ENCODE measurements at regions of chr1 and their contacts with region 1.

Region 1: GRCh38 chr1:212749821-212750535 is 41.6 kb downstream of the NSL1 start:
- DNase-seq: peak; percentile 67
- H3K4me3 ChIP-seq: no peak overlapping the region
- H3K27ac ChIP-seq: peak overlapping the region; percentile 13
- H3K4me1 ChIP-seq: no peaks in the 10 kb centered on the region
- H3K27me3 ChIP-seq: no peaks in the 10 kb centered on the region
- CTCF ChIP-seq: peak; percentile 68 to 79
- POLR2A ChIP-seq: no peak

Region 2: DNA sequence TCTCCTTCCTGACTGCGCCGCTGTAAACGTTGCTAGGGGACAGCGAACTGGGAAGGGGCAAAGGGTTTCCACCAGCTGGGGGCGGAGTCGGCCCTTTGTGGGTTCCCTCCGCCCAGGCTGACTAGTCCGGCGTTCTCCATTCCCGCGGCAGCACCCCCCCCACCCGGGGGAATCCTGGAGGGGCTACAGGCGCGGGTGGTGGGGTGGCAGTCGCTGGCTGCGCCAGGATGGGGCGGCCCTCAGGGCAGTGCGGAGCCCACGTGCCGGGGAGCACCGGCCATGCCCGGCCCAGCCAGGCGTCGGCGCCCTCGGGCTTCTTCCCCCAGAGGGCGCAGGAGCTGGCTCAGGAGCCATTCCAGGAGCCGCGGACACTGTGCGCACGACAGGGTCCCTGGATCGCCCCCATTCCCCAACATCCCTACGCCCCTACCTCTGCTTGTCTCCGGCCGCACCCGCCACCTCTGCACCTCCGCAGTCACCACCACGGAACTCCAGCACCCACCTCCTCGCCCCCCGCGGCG is 50.8 kb before region 1 on chr1:
- CTCF ChIA-PET with region 1: interaction called, 14 read pairs
- POLR2A ChIA-PET with region 1: no interaction called
- dilution Hi-C with region 1: no loop called
- intact Hi-C with region 1: no loop called
- DNase-seq: peak; percentile 18
- H3K4me3 ChIP-seq: peak overlapping the region in 1 of 3 experiments; percentile 38
- H3K27ac ChIP-seq: no peak overlapping the region
- H3K4me1 ChIP-seq: peaks cover 16% of the 10 kb centered on the region
- H3K27me3 ChIP-seq: peaks cover 37 to 62% of the 10 kb centered on the region in 2 experiments
- CTCF ChIP-seq: peak; percentile 33 to 75
- POLR2A ChIP-seq: no peak

Region 3: DNA sequence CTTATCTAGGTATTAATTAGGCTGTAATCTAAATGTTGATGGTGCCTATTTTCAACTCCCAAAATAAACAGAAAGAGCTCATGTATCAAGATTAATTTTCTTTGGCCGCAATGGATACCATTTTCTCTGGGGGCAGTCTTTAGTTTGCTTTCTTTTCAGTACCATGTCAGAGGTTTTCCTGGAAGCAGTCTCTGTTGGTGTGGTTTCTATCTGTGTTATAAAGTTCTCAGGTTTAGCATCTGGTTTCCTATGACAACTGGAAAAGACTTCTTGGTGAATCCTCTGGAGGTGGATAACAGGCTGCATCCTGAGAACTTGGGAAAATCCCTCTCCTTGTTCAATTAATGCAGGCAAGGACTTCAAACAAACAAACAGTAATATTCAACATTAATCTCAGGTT is 11.6 kb before region 1 on chr1:
- CTCF ChIA-PET with region 1: interaction called, 13 read pairs
- POLR2A ChIA-PET with region 1: no interaction called
- dilution Hi-C with region 1: no loop called
- intact Hi-C with region 1: no loop called
- DNase-seq: no peak
- H3K4me3 ChIP-seq: no peak overlapping the region
- H3K27ac ChIP-seq: no peak overlapping the region
- H3K4me1 ChIP-seq: no peaks in the 10 kb centered on the region
- H3K27me3 ChIP-seq: no peaks in the 10 kb centered on the region
- CTCF ChIP-seq: no peak
- POLR2A ChIP-seq: no peak

Region 4: GRCh38 chr1:212777151-212777550 is 27.2 kb after region 1 on chr1:
- CTCF ChIA-PET with region 1: interaction called, 31 read pairs
- POLR2A ChIA-PET with region 1: no interaction called
- dilution Hi-C with region 1: no loop called
- intact Hi-C with region 1: loop called (anchors 2 kb)
- DNase-seq: no peak
- H3K4me3 ChIP-seq: no peak overlapping the region
- H3K27ac ChIP-seq: no peak overlapping the region
- H3K4me1 ChIP-seq: peaks cover 4% of the 10 kb centered on the region
- H3K27me3 ChIP-seq: no peaks in the 10 kb centered on the region
- CTCF ChIP-seq: no peak
- POLR2A ChIP-seq: no peak

Region 5: GRCh38 chr1:212791676-212792395 is 41.9 kb after region 1 on chr1 and contains the starts of genes NSL1 and TATDN3:
- CTCF ChIA-PET with region 1: interaction called, 23 read pairs
- POLR2A ChIA-PET with region 1: interaction called, 3 read pairs
- dilution Hi-C with region 1: no loop called
- intact Hi-C with region 1: no loop called
- DNase-seq: peak; percentile 95
- H3K4me3 ChIP-seq: peak within 1 kb of the TSS; percentile 77 to 97 (median 94)
- H3K27ac ChIP-seq: peak within 1 kb of the TSS; percentile 81
- H3K4me1 ChIP-seq: peaks cover 21% of the 10 kb centered on the region
- H3K27me3 ChIP-seq: no peaks in the 10 kb centered on the region
- CTCF ChIP-seq: no peak
- POLR2A ChIP-seq: peak; percentile 92
- total RNA-seq, gene NSL1: 27.7 and 30.2 TPM in 2 replicates
- total RNA-seq, gene TATDN3: 7.8 and 8.0 TPM in 2 replicates

Region 6: GRCh38 chr1:212994926-212995325 is 244.9 kb after region 1 on chr1:
- CTCF ChIA-PET with region 1: interaction called, 57 read pairs
- POLR2A ChIA-PET with region 1: no interaction called
- dilution Hi-C with region 1: no loop called
- intact Hi-C with region 1: loop called (anchors 1 kb)
- DNase-seq: no peak
- H3K4me3 ChIP-seq: no peak overlapping the region
- H3K27ac ChIP-seq: no peak overlapping the region
- H3K4me1 ChIP-seq: no peaks in the 10 kb centered on the region
- H3K27me3 ChIP-seq: no peaks in the 10 kb centered on the region
- CTCF ChIP-seq: no peak
- POLR2A ChIP-seq: no peak

Region 7: GRCh38 chr1:213366141-213366831 is 616.3 kb after region 1 on chr1:
- CTCF ChIA-PET with region 1: no interaction called
- POLR2A ChIA-PET with region 1: no interaction called
- dilution Hi-C with region 1: no loop called
- intact Hi-C with region 1: no loop called
- DNase-seq: no peak
- H3K4me3 ChIP-seq: no peak overlapping the region
- H3K27ac ChIP-seq: no peak overlapping the region
- H3K4me1 ChIP-seq: no peaks in the 10 kb centered on the region
- H3K27me3 ChIP-seq: peaks cover 0 to 2% of the 10 kb centered on the region in 2 experiments
- CTCF ChIP-seq: no peak
- POLR2A ChIP-seq: no peak